Activated CD4-positive, alpha-beta T cell treated with anti-CD3 and anti-CD28 coated beads for 36 hours (primary cell): ENCODE measurements at regions of chr9 and their contacts with region 1.

Region 1: GRCh38 chr9:96854073-96854876 is at the start of gene ZNF782:
- DNase-seq: peak; percentile 92
- ATAC-seq: peak; percentile 92
- H3K4me3 Mint-ChIP-seq: peak within 1 kb of the TSS; percentile 96
- H3K27ac Mint-ChIP-seq: peak within 1 kb of the TSS; percentile 100
- H3K4me1 Mint-ChIP-seq: peaks cover 49% of the 10 kb centered on the region
- H3K27me3 Mint-ChIP-seq: peaks cover 11% of the 10 kb centered on the region
- total RNA-seq, gene ZNF782: 3.8 to 4.8 TPM

Region 2: DNA sequence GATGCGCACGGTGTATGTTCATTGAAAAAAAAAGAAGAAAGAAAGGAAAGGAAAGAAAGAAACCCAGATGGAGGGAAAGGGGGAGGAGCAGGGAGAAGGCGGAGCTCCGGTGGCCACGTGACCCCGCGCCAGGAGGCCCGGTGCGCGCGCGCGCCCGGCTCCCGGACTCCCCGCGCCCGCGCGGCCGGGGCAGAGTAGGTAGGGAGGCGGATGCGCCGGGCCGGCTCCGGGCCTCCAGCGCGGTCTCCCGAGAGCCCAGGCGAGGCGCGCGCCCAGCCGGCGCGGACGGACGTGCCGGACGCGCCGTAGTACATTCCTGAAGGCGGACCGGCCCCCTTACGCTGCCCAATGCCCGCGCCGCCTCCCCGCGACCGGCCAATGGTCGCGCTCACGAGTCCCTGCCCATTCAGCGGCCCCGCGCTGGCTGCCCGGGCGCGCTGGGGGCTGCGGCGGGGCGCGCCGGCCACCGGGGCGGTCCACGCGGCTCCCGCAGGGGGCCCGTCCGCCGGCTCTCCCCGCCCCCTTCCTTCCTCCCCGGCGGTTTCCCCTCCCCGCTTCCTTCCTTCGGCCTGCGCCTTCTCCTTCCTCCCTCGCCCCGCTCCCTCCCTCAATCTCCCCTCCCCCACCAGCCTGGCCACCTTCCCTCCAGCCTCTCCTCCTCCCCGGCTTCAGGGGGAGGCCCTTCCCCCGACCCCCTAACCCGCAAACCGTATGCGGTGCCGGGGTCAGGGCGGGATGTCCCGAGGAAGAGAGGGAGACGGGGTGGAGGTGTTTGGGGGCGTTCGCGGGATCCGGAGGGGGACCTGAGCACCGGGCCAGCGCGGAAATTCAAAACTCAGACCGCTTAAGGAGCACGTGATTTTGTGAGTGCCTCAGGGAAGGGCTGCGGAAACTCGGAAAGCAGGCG is 1343.3 kb before region 1 on chr9:
- CTCF ChIA-PET with region 1: no interaction called
- POLR2A ChIA-PET with region 1: no interaction called
- intact Hi-C with region 1: loop called in 1 of 2 experiments (anchors 10 kb)
- DNase-seq: peak; percentile 92
- ATAC-seq: peak; percentile 74
- H3K4me3 Mint-ChIP-seq: peak overlapping the region; percentile 82
- H3K27ac Mint-ChIP-seq: peak overlapping the region; percentile 84
- H3K4me1 Mint-ChIP-seq: peaks cover 38% of the 10 kb centered on the region
- H3K27me3 Mint-ChIP-seq: peaks cover 26% of the 10 kb centered on the region

Region 3: GRCh38 chr9:96777426-96777864 is 76.8 kb before region 1 on chr9:
- CTCF ChIA-PET with region 1: interaction called, 3 read pairs
- POLR2A ChIA-PET with region 1: no interaction called
- intact Hi-C with region 1: loop called (anchors 1 to 2 kb)
- DNase-seq: no peak
- ATAC-seq: no peak
- H3K4me3 Mint-ChIP-seq: peak overlapping the region; percentile 93
- H3K27ac Mint-ChIP-seq: peak overlapping the region; percentile 95
- H3K4me1 Mint-ChIP-seq: peaks cover 24% of the 10 kb centered on the region
- H3K27me3 Mint-ChIP-seq: no peaks in the 10 kb centered on the region

Region 4: DNA sequence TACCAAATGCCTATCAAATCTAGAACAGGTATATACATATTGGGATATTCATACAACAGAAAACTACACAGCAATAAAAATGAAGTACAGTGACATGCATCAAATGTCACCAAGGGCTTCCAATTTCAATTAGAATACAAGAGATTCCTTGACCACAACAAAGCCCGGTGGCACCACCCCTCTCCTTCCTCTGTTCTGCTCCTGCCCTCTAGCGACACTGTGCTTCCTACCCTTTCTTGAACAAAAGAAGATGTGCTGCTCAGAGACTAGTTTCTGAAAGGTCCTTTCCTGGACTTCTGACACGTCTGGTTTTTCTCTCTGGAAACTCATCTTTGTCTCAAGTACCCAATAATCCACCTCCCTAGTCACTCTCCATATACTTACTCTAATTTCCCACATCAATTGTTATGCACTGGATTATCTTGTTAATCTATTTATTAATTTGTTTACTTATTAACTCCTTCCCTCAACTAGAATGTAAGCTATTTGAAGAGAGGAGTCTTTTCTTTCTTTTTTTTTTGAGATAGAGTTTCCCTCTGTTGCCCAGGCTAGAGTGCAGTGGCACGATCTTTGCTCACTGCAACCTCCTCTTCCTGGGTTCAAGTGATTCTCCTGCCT is 255.0 kb after region 1 on chr9:
- CTCF ChIA-PET with region 1: interaction called, 11 read pairs
- POLR2A ChIA-PET with region 1: no interaction called
- intact Hi-C with region 1: loop called (anchors 1 kb)
- DNase-seq: peak; percentile 70
- ATAC-seq: peak; percentile 71
- H3K4me3 Mint-ChIP-seq: no peak overlapping the region
- H3K27ac Mint-ChIP-seq: no peak overlapping the region
- H3K4me1 Mint-ChIP-seq: no peaks in the 10 kb centered on the region
- H3K27me3 Mint-ChIP-seq: no peaks in the 10 kb centered on the region

Region 5: DNA sequence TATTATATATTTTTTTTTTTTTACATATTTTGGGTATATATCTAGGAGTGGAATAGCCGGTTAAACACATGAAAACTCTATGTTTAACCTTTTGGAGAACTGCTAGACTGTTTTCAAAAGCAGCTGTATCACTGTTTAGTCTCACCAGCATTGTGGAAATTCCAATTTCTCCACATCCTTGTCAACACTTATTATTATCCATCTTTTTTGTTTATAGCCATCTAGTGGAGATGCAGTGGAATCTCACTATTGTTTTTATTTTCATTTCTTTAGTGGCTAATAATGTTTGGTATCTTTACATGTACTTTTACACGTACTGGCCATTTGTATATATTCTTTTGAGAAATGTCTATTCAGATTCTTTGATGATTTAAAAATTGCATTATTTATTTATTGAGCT is 430.5 kb after region 1 on chr9:
- CTCF ChIA-PET with region 1: interaction called, 6 read pairs
- POLR2A ChIA-PET with region 1: no interaction called
- intact Hi-C with region 1: loop called in 1 of 2 experiments (anchors 2 kb)
- DNase-seq: no peak
- ATAC-seq: no peak
- H3K4me3 Mint-ChIP-seq: no peak overlapping the region
- H3K27ac Mint-ChIP-seq: no peak overlapping the region
- H3K4me1 Mint-ChIP-seq: no peaks in the 10 kb centered on the region
- H3K27me3 Mint-ChIP-seq: no peaks in the 10 kb centered on the region

Region 6: GRCh38 chr9:97411789-97412625 is 557.7 kb after region 1 on chr9 and contains the start of gene TDRD7:
- CTCF ChIA-PET with region 1: interaction called, 4 read pairs
- POLR2A ChIA-PET with region 1: no interaction called
- intact Hi-C with region 1: loop called in 1 of 2 experiments (anchors 1 kb)
- DNase-seq: peak; percentile 94
- ATAC-seq: peak; percentile 91
- H3K4me3 Mint-ChIP-seq: peak within 1 kb of the TSS; percentile 74
- H3K27ac Mint-ChIP-seq: peak within 1 kb of the TSS; percentile 58
- H3K4me1 Mint-ChIP-seq: peaks cover 22% of the 10 kb centered on the region
- H3K27me3 Mint-ChIP-seq: peaks cover 16% of the 10 kb centered on the region
- total RNA-seq, gene TDRD7: 9.3 TPM

Region 7: GRCh38 chr9:97615439-97616072 is 761.3 kb after region 1 on chr9:
- CTCF ChIA-PET with region 1: interaction called, 3 read pairs
- POLR2A ChIA-PET with region 1: no interaction called
- intact Hi-C with region 1: loop called (anchors 5 kb)
- DNase-seq: peak; percentile 72
- ATAC-seq: peak; percentile 39
- H3K4me3 Mint-ChIP-seq: no peak overlapping the region
- H3K27ac Mint-ChIP-seq: no peak overlapping the region
- H3K4me1 Mint-ChIP-seq: peaks cover 15% of the 10 kb centered on the region
- H3K27me3 Mint-ChIP-seq: no peaks in the 10 kb centered on the region